CD4-positive, alpha-beta memory T cell (primary cell): ENCODE measurements at regions of chr4 and their contacts with region 1.

Region 1: GRCh38 chr4:154551872-154552686 is 1.9 kb upstream of the PLRG1 start:
- DNase-seq: peak; percentile 68 to 72 (median 68)
- H3K4me3 ChIP-seq: no peak overlapping the region
- H3K4me3 Mint-ChIP-seq: peak overlapping the region in 2 of 8 donors; percentile 29 to 57
- H3K27ac ChIP-seq: no peak overlapping the region
- H3K27ac Mint-ChIP-seq: peak overlapping the region in 3 of 7 donors; percentile 18 to 62 (median 47)
- H3K4me1 ChIP-seq: peaks cover 22% of the 10 kb centered on the region
- H3K4me1 Mint-ChIP-seq: peaks cover 13 to 28% (median 24%) of the 10 kb centered on the region in 4 donors
- H3K27me3 ChIP-seq: no peaks in the 10 kb centered on the region
- H3K27me3 Mint-ChIP-seq: no peaks in the 10 kb centered on the region

Region 2: DNA sequence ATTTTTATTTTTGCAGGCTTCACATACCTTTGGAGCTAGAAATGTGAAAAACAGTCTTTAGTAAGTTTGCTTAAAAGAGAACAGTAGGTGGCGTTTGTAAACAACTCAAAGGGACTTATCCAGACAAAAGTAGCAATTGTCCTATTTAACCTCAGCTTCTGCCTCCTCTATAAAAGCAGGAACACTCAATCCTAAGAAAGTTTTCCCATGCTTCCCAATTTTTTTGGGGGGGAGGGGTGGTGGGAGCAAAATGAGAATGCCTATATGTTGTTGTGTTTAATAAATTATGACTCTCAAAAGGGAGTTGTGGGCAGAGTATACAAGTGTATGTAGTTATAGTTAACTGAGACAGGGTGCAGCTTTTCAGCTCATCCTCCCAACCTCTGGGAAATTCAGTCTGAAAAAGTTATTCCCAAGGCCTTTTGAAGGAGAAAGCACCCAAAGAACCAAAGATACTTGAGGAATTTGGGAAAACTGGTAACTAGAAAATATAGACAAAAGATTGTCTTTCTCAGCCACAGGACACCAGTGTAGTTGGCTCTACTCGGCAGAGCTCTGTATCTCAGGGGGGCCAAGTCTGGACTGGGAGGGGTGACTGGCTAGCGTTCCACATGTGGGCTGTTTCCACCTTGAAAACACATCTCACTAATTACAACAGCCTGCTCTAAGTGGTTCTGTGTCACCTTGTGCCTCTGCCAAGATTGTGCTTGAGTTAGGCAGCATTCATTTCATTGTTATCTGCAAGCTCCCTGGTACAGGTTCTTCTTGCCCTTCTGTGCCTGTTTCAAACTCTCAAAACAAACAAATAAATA is 766.0 kb before region 1 on chr4:
- CTCF ChIA-PET with region 1: no interaction called
- POLR2A ChIA-PET with region 1: no interaction called
- intact Hi-C with region 1: loop called (anchors 5 kb)
- DNase-seq: peak in 1 of 5 donors; percentile 21
- H3K4me3 ChIP-seq: no peak overlapping the region
- H3K4me3 Mint-ChIP-seq: no peak overlapping the region
- H3K27ac ChIP-seq: no peak overlapping the region
- H3K27ac Mint-ChIP-seq: no peak overlapping the region
- H3K4me1 ChIP-seq: peaks cover 20% of the 10 kb centered on the region
- H3K4me1 Mint-ChIP-seq: peaks cover 7 to 28% (median 19%) of the 10 kb centered on the region in 4 donors
- H3K27me3 ChIP-seq: peaks cover 21% of the 10 kb centered on the region
- H3K27me3 Mint-ChIP-seq: peaks cover 50 to 67% of the 10 kb centered on the region in 2 donors

Region 3: GRCh38 chr4:154164931-154165839 is 386.9 kb before region 1 on chr4:
- CTCF ChIA-PET with region 1: no interaction called
- POLR2A ChIA-PET with region 1: no interaction called
- intact Hi-C with region 1: no loop called
- DNase-seq: no peak
- H3K4me3 ChIP-seq: no peak overlapping the region
- H3K4me3 Mint-ChIP-seq: no peak overlapping the region
- H3K27ac ChIP-seq: no peak overlapping the region
- H3K27ac Mint-ChIP-seq: no peak overlapping the region
- H3K4me1 ChIP-seq: no peaks in the 10 kb centered on the region
- H3K4me1 Mint-ChIP-seq: no peaks in the 10 kb centered on the region
- H3K27me3 ChIP-seq: no peaks in the 10 kb centered on the region
- H3K27me3 Mint-ChIP-seq: peaks cover 0 to 3% of the 10 kb centered on the region in 2 donors

Region 4: DNA sequence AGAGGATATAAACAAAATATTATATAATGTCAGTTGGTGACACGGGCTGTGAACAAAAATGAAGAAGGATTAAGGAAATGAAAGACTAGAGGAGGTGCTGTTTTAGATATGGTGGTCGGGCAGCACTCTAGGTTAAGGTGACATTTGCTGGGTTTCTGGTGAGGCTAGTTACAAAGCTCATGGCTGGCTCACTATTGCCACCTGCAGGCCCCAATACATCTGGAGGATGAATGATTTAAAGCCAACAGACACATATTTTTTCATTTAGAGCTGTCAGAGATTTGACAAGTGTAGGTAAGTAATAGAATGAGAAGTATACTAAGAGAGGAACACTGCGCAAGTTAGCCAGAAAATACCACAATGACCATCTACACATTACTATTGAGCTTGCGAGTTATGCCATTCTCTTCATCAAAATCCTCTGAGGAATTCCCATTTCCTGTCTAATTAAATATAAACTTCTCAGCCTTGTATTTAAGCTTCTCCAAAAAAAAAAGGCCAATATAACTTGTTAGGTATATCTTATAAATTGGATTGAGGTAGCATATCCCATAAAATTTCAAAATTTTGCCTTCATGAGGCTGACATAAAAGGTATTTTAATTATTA is 66.7 kb after region 1 on chr4:
- CTCF ChIA-PET with region 1: interaction called, 120 read pairs
- POLR2A ChIA-PET with region 1: no interaction called
- intact Hi-C with region 1: loop called (anchors 1 kb)
- DNase-seq: peak in 4 of 5 donors; percentile 18 to 33 (median 27)
- H3K4me3 ChIP-seq: no peak overlapping the region
- H3K4me3 Mint-ChIP-seq: no peak overlapping the region
- H3K27ac ChIP-seq: no peak overlapping the region
- H3K27ac Mint-ChIP-seq: no peak overlapping the region
- H3K4me1 ChIP-seq: no peaks in the 10 kb centered on the region
- H3K4me1 Mint-ChIP-seq: peaks cover 0 to 3% (median under 1%) of the 10 kb centered on the region in 4 donors
- H3K27me3 ChIP-seq: no peaks in the 10 kb centered on the region
- H3K27me3 Mint-ChIP-seq: peaks cover 2 to 7% of the 10 kb centered on the region in 2 donors

Region 5: DNA sequence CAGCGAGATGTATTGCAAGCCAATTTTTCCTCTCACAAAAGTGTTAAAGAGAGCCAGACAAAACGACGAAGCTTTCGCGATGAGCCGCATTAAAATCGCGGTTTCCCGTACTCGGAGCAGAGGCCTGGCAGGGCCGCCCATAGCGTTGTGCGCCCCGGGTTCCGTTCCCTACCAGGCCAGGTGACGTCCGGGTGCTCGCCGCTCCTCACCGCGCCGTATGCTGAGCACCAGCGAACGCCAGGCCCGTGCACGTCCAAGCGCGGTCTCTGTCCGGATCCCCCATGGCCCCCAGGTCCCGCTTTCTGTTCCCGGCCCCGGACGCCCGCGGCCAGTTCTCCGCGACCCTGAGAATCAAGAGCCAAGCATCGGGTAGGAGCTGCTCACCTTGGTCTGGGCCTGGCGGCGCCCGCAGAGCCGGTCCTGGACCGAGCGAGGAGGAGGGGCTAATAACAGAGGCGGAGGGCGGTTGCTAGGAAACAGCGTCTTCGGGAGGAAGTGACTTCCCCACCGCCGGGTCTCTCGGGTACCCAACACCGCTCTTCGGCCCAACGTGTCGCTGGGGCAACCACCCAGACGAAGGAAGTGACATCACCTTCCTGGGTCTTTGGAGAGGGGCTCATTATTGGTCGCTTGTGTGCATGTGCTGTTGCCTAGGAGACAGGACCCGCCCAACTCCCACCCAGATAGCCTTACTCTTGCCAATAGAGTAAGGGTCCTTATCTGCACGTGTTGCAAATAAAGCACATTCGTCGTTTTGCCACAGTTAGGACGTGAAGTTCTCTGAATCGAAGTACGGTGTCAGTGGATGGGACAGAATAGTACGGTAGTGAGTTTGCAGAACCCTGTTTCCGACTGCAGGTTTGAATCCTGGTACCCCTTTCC is 824.5 kb after region 1 on chr4 and contains the start of gene MAP9:
- CTCF ChIA-PET with region 1: interaction called, 37 read pairs
- POLR2A ChIA-PET with region 1: interaction called, 19 read pairs
- intact Hi-C with region 1: loop called (anchors 1 kb)
- DNase-seq: peak; percentile 89 to 95 (median 93)
- H3K4me3 ChIP-seq: peak within 1 kb of the TSS; percentile 24 to 60
- H3K4me3 Mint-ChIP-seq: peak within 1 kb of the TSS; percentile 86 to 92 (median 90)
- H3K27ac ChIP-seq: peak within 1 kb of the TSS; percentile 69
- H3K27ac Mint-ChIP-seq: peak within 1 kb of the TSS; percentile 95 to 99 (median 96)
- H3K4me1 ChIP-seq: peaks cover 15% of the 10 kb centered on the region
- H3K4me1 Mint-ChIP-seq: peaks cover 12 to 27% (median 18%) of the 10 kb centered on the region in 4 donors
- H3K27me3 ChIP-seq: no peaks in the 10 kb centered on the region
- H3K27me3 Mint-ChIP-seq: no peaks in the 10 kb centered on the region
- total RNA-seq, gene MAP9: 5.8 to 7.9 TPM

Region 6: GRCh38 chr4:155953151-155954114 is 1401.4 kb after region 1 on chr4 and contains the start of gene CTSO:
- CTCF ChIA-PET with region 1: interaction called, 5 read pairs
- POLR2A ChIA-PET with region 1: interaction called, 14 read pairs
- intact Hi-C with region 1: loop called (anchors 1 kb)
- DNase-seq: peak; percentile 72 to 79 (median 76)
- H3K4me3 ChIP-seq: peak within 1 kb of the TSS; percentile 47 to 92
- H3K4me3 Mint-ChIP-seq: peak within 1 kb of the TSS; percentile 97 to 100 (median 99)
- H3K27ac ChIP-seq: peak within 1 kb of the TSS; percentile 87
- H3K27ac Mint-ChIP-seq: peak within 1 kb of the TSS; percentile 99 to 100 (median 99)
- H3K4me1 ChIP-seq: peaks cover 17% of the 10 kb centered on the region
- H3K4me1 Mint-ChIP-seq: peaks cover 10 to 38% (median 27%) of the 10 kb centered on the region in 4 donors
- H3K27me3 ChIP-seq: no peaks in the 10 kb centered on the region
- H3K27me3 Mint-ChIP-seq: peaks cover 2 to 4% of the 10 kb centered on the region in 2 donors
- total RNA-seq, gene CTSO: 12.9 to 13.1 TPM